PC-3 (cell line): ENCODE measurements at regions of chr7 and their contacts with region 1.

Region 1: GRCh38 chr7:21427182-21427870 is 557 bp upstream of the SP4 start:
- DNase-seq: peak; percentile 96
- ATAC-seq: peak; percentile 75
- H3K4me3 ChIP-seq: peak overlapping the region; percentile 74
- H3K27ac ChIP-seq: peak overlapping the region; percentile 82
- H3K4me1 ChIP-seq: peaks cover 10% of the 10 kb centered on the region
- H3K27me3 ChIP-seq: no peaks in the 10 kb centered on the region
- CTCF ChIP-seq: no peak

Region 2: GRCh38 chr7:20959271-20959670 is 468.1 kb before region 1 on chr7:
- CTCF ChIA-PET with region 1: no interaction called
- POLR2A ChIA-PET with region 1: interaction called, 12 read pairs
- intact Hi-C with region 1: no loop called
- DNase-seq: peak; percentile 92
- ATAC-seq: peak; percentile 94
- H3K4me3 ChIP-seq: peak overlapping the region; percentile 6; the same call in 1 of the 2 replicates
- H3K27ac ChIP-seq: peak overlapping the region; percentile 7; the same call in 1 of the 2 replicates
- H3K4me1 ChIP-seq: peaks cover 27% of the 10 kb centered on the region
- H3K27me3 ChIP-seq: peaks cover 37% of the 10 kb centered on the region
- CTCF ChIP-seq: no peak

Region 3: DNA sequence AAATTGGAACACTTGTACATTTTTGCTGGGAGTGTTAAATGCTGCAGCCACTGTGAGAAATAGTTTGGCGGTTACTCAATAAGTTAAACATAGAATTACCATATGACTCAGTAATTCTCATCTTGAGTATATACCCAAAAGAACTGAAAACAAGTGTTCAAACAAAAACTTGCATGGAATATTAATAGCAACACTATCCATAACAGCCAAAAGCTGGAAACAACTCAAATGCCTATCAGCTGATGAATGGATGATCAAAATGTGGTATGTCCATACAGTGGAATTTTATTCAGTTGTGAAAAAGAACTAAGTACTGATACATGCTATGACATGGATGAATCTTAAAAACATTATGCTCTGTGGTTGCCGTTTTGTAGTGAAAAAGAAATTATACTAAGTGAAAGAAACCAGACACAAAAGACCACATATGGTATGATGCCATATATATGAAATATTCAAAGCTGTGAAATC is 62.5 kb before region 1 on chr7:
- CTCF ChIA-PET with region 1: no interaction called
- POLR2A ChIA-PET with region 1: no interaction called
- intact Hi-C with region 1: loop called (anchors 1 kb)
- DNase-seq: peak; percentile 69
- ATAC-seq: peak; percentile 61
- H3K4me3 ChIP-seq: no peak overlapping the region
- H3K27ac ChIP-seq: peak overlapping the region; percentile 86
- H3K4me1 ChIP-seq: peaks cover 28% of the 10 kb centered on the region
- H3K27me3 ChIP-seq: no peaks in the 10 kb centered on the region
- CTCF ChIP-seq: no peak

Region 4: DNA sequence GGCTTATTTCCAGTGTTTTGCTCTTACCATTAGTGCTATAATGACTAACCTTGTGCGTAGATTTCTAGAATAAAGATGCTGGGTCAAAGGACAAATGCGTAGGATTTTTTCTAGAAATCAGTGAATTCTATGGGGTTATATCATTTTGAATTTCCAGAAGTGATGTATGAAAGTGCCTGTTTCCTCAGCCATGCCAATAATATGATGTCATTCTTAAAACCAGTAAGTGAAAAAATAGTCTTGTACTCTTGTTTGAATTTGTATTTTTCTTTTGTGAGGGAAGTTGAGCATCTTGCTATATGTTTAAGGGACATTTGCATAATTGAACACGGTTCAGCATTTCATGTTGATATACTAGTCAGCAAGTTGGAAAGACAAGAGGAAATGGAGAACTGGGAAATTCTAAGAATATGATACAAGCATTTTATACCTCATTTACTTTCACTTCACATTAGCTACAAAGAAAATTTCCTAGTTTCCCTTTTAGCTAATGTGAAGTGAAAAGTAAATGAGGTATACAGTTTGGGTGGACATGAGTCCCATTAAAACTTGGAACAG is 111.7 kb after region 1 on chr7:
- CTCF ChIA-PET with region 1: no interaction called
- POLR2A ChIA-PET with region 1: no interaction called
- intact Hi-C with region 1: no loop called
- DNase-seq: no peak
- ATAC-seq: no peak
- H3K4me3 ChIP-seq: no peak overlapping the region
- H3K27ac ChIP-seq: no peak overlapping the region
- H3K4me1 ChIP-seq: 0 out of 2 replicates have a peak, but pooled peaks cover 6% of the 10 kb centered on the region
- H3K27me3 ChIP-seq: peaks cover 43% of the 10 kb centered on the region
- CTCF ChIP-seq: no peak

Region 5: GRCh38 chr7:21767300-21767900 is 340.1 kb after region 1 on chr7:
- CTCF ChIA-PET with region 1: no interaction called
- POLR2A ChIA-PET with region 1: interaction called, 10 read pairs
- intact Hi-C with region 1: no loop called
- DNase-seq: peak; percentile 83
- ATAC-seq: peak; percentile 99
- H3K4me3 ChIP-seq: no peak overlapping the region
- H3K27ac ChIP-seq: no peak overlapping the region
- H3K4me1 ChIP-seq: no peaks in the 10 kb centered on the region
- H3K27me3 ChIP-seq: peaks cover 24% of the 10 kb centered on the region
- CTCF ChIP-seq: peak; percentile 90